OCI-LY7 (cell line): ENCODE measurements at regions of chr12 and their contacts with region 1.

Region 1: DNA sequence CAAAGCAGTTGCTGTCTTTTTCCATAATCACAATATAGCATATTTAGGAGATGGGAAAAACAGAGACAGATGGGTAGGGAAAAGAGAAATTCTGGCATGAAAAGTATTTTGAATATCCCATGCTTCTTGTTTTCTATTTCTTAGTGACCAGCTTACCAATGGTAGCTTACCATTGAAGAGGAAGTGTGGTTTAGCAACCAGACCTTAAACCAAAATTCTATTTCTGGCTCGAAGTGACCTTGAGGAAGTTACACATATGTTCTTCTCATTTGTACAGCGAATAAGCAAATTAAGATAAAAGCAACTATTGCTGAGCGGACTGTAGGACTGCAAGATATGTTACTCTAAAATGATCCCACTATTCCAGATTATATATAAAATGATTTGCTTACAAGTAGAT is 82.9 kb downstream of the FGD4 start:
- DNase-seq: peak; percentile 87
- H3K4me3 ChIP-seq: peak overlapping the region; percentile 57
- H3K27ac ChIP-seq: peak overlapping the region; percentile 83
- H3K4me1 ChIP-seq: peaks cover 78% of the 10 kb centered on the region
- CTCF ChIP-seq: no peak

Region 2: DNA sequence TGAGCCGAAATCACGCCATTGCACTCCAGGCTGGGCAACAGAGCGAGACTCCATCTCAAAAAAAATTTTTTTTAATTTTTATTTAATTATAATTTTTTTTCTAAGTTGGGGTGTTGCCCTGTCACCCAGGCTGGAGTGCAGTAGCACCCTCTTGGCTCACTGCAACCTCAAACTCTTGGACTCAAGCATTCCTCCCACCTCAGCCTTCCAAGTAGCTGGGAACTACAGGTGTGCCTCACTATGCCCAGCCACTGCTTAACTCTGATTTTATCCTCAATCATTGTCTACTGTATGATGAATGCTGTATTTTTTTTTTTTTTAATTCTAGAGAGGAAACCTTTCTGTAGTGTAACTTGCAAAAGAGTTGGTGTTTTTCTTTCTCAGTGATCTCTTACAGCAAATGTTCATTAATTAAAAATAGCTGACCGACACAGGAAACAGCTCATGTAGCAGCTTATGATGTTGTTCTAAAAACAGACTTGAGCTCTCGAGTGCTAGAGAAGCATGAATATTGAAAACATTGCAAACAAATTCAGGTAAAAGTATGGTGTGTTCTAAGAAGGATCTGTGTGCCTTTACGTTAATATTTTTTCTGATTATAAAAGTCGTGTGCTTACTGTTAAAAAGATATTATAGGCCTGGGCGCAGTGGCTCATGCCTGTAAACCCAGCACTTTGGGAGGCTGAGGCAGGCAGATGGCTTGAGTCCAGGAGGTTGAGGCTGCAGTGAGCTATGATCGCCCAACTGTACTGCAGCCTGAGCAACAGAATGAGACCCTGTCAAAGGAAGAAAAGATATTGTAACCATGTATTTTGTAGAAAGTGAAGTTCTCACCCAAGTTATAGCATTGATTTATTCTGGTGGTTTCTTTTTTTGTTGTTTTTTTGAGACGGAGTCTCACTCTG is 14.0 kb before region 1 on chr12:
- CTCF ChIA-PET with region 1: interaction called, 4 read pairs
- POLR2A ChIA-PET with region 1: interaction called, 46 read pairs
- intact Hi-C with region 1: no loop called
- DNase-seq: peak; percentile 80
- H3K4me3 ChIP-seq: peak overlapping the region; percentile 52
- H3K27ac ChIP-seq: peak overlapping the region; percentile 94
- H3K4me1 ChIP-seq: peaks cover 45% of the 10 kb centered on the region
- CTCF ChIP-seq: no peak

Region 3: DNA sequence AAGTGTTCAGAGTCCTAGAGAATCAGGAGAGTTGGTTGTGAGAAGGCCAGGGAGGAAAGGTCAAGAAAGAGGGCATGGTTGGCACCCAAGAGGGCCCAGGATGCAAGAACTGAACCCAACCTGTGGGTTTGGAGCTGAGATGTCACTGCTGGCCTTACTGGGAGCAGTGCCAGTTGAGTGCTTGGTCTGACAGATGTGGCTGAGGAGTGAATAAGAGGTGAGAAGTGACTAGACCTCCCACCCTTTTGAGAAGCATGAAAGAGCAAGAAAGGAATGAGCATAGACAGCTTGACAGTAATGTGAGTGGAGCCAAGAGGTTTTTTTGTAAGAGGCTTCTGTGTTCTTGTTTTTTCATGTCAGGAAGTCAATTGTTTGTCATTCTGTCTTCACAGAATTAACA is 12.4 kb after region 1 on chr12:
- CTCF ChIA-PET with region 1: interaction called, 12 read pairs
- POLR2A ChIA-PET with region 1: interaction called, 40 read pairs
- intact Hi-C with region 1: no loop called
- DNase-seq: peak; percentile 30
- H3K4me3 ChIP-seq: no peak overlapping the region
- H3K27ac ChIP-seq: peak overlapping the region; percentile 36
- H3K4me1 ChIP-seq: peaks cover 71% of the 10 kb centered on the region
- CTCF ChIP-seq: no peak

Region 4: GRCh38 chr12:32515137-32515873 is 33.1 kb after region 1 on chr12:
- CTCF ChIA-PET with region 1: no interaction called
- POLR2A ChIA-PET with region 1: interaction called, 21 read pairs
- intact Hi-C with region 1: no loop called
- DNase-seq: peak; percentile 51
- H3K4me3 ChIP-seq: peak overlapping the region; percentile 22
- H3K27ac ChIP-seq: peak overlapping the region; percentile 61
- H3K4me1 ChIP-seq: peaks cover 39% of the 10 kb centered on the region
- CTCF ChIP-seq: no peak

Region 5: DNA sequence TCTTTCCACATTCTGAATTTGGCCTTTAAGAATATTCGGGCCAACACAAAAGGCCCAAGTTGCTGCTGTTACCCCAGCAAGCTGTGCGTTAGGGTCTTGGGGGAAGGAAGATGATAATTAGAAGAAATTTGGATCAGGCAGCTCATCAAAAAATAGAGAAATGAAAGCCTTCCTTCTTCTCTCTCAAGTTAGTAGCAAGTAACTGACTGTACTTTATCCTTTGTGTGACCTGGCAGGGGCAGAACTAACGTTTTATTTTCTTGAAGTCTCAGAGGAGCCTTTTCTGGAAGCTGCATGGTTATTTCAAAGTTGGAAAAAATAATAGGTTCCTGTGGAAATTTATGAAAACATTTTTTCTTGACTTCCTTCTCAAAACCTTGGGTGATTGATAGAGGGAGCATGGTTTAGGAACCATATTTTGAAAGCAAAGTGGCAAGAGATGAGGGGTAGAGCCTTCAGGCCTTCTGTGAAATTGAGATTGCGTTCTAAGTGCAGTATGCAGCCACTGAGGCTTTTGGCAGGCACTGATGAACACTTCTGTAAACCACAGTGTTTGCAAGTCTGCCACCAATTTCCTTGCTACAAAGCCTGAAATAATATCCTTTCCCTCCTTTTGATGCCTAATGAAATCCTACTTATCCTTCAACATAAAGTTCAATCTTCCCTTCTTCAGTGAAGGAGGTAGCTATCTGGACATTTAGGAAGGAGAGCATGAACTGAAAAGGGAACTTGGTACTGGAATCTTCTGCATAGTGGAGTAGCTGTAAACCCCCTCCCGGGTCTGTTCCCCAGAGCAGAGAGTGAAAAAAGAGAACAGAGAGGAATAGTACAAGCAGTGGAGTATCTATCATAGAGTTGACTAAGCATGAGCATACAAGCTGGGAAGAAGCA is 40.4 kb after region 1 on chr12:
- CTCF ChIA-PET with region 1: no interaction called
- POLR2A ChIA-PET with region 1: interaction called, 11 read pairs
- intact Hi-C with region 1: loop called (anchors 2 kb)
- DNase-seq: peak; percentile 75
- H3K4me3 ChIP-seq: peak overlapping the region; percentile 47
- H3K27ac ChIP-seq: peak overlapping the region; percentile 92
- H3K4me1 ChIP-seq: peaks cover 67% of the 10 kb centered on the region
- CTCF ChIP-seq: no peak